ENCODE measurements at regions of chr4 and their contacts with region 1.

Region 1: DNA sequence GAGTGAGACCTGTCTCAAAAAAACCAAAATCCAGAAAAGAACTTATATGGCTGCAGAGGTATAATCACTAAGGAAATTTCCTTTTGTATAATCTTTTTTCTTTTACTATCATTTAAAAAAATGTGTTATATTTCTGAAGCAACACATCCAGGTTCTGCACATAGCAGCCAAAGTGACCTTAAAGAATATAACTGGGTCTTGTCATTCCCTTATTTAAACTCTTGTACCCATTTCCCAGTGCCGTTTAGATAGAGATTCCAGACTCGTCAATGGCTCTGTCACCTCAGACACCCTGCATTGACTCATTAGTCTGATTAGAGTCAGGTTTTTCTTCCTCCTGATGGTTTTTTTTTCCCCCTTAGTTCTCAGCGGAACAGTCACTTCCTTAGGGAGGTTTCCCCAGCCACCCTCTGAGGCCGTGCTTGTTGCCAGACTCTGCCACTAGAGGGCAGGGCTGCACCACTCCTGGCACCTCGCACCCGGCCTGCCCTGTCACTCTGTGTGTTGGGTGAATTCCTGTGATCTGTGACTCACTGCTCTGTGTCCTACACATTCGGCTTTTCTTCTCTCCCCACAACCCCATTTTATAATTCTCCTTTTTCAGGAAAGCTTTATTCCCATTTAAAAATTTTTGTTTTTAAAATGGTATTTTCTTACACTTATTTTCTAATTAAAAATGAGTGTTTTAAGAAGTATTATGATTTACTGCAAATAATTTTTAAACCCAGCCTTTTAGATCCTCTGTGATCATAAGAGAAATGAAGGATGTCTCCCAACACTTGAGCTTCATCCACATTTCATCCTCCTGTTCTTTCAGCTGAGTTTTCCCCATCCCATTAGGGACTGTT is 32.1 kb downstream of the HTT start:
- DNase-seq: peak; percentile 88 to 94
- ATAC-seq: peak; percentile 98 to 100 (median 100)
- H3K4me3 ChIP-seq: no peak overlapping the region
- H3K27ac ChIP-seq: peak overlapping the region; percentile 62
- H3K4me1 ChIP-seq: peaks cover 16% of the 10 kb centered on the region
- H3K27me3 ChIP-seq: no peaks in the 10 kb centered on the region
- CTCF ChIP-seq: peak; percentile 98

Region 2: DNA sequence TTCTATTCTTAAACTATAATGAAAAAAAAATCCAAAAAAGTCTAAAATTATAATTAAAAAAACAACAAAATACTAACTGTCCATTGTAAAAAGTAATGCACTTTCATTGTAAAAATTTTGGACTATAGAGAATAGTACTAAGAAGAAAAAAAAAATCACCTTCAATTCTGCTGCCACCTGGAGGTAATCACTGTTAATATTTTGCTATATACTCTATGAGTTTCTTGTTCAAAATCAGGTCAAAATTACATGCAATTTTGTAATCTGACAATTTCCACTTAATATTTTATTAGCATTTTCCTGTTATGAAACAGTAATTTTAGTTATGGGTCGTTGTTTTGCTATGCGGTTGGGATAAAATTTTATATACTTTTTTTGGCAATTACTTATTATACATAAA is 29.9 kb after region 1 on chr4:
- intact Hi-C with region 1: loop called (anchors 2 to 5 kb)
- DNase-seq: no peak
- ATAC-seq: peak in 1 of 4 donors; percentile 71
- H3K4me3 ChIP-seq: no peak overlapping the region
- H3K27ac ChIP-seq: no peak overlapping the region
- H3K4me1 ChIP-seq: no peaks in the 10 kb centered on the region
- H3K27me3 ChIP-seq: no peaks in the 10 kb centered on the region
- CTCF ChIP-seq: peak; percentile 44

Region 3: DNA sequence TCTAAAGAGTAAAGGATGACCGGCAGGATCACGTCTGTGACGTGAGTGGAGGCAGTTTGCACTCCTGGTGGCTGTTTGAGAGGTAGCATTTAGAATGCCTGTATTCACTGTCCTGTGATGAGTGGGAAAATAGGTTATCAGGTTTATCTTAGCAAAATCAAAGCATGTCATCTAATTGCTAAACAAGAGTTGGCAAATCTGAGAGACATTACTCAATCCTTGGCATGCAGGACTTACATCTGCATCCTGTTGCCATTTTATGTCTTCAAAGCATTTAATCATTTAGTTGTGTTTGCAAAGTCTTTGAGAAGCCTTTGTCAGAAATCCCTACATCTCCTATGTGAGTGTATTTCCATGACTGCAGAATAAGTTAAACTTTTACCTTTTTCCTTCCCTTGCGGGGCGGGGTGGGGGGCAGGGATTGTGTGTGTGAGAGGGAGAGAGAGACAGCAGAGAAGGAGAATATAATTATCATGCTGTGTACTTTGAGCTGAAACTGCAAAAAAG is 101.0 kb after region 1 on chr4:
- intact Hi-C with region 1: no loop called
- DNase-seq: no peak
- ATAC-seq: no peak
- H3K4me3 ChIP-seq: no peak overlapping the region
- H3K27ac ChIP-seq: no peak overlapping the region
- H3K4me1 ChIP-seq: peaks cover 21% of the 10 kb centered on the region
- H3K27me3 ChIP-seq: no peaks in the 10 kb centered on the region
- CTCF ChIP-seq: no peak

Region 4: GRCh38 chr4:3880615-3881120 is 774.1 kb after region 1 on chr4:
- intact Hi-C with region 1: loop called in 1 of 2 experiments (anchors 10 kb)
- DNase-seq: peak; percentile 48 to 79
- ATAC-seq: peak; percentile 80 to 96 (median 88)
- H3K4me3 ChIP-seq: no peak overlapping the region
- H3K27ac ChIP-seq: no peak overlapping the region
- H3K4me1 ChIP-seq: no peaks in the 10 kb centered on the region
- H3K27me3 ChIP-seq: peaks cover 0 to 54% (median 18%) of the 10 kb centered on the region in 3 donors
- CTCF ChIP-seq: peak; percentile 60

Measured in psoas muscle (tissue), 8 donors.